ENCODE measurements at regions of chr2 and their contacts with region 1.

Region 1: DNA sequence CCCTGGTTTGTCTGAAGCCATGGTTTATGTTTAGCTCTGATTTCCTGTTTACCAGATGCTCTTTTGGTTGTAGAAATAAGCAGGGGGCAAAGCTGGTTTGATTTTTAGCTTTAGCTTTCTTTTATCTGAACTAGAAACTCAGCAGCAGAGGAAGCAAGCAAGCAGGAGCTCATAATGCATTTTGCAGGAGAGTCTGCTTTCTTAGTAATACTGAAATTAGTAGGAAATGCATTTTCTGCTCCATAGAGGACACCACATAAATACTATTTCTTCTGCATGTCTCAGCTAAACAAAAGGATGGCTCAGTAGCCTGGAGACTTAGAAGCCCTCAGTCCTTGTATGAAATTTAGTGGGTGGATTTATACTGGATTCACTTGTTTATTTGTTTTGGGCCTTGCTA is 23.1 kb downstream of the DGUOK start:
- DNase-seq: no peak
- ATAC-seq: no peak
- H3K4me3 ChIP-seq: no peak overlapping the region
- H3K4me3 Mint-ChIP-seq: peak overlapping the region; percentile 23
- H3K27ac ChIP-seq: no peak overlapping the region
- H3K27ac Mint-ChIP-seq: peak overlapping the region; percentile 87
- H3K4me1 ChIP-seq: peaks cover 35% of the 10 kb centered on the region
- H3K4me1 Mint-ChIP-seq: peaks cover 83% of the 10 kb centered on the region
- H3K27me3 ChIP-seq: no peaks in the 10 kb centered on the region
- H3K27me3 Mint-ChIP-seq: no peaks in the 10 kb centered on the region
- CTCF ChIP-seq: no peak

Region 2: GRCh38 chr2:73970850-73971471 is 21.2 kb after region 1 on chr2:
- CTCF ChIA-PET with region 1: no interaction called
- POLR2A ChIA-PET with region 1: interaction called, 15 read pairs
- intact Hi-C with region 1: no loop called
- DNase-seq: peak; percentile 23 to 89 (median 53)
- ATAC-seq: peak; percentile 84
- H3K4me3 ChIP-seq: peak overlapping the region; percentile 31
- H3K4me3 Mint-ChIP-seq: peak overlapping the region; percentile 70
- H3K27ac ChIP-seq: peak overlapping the region; percentile 60 to 65
- H3K27ac Mint-ChIP-seq: peak overlapping the region; percentile 96
- H3K4me1 ChIP-seq: peaks cover 45% of the 10 kb centered on the region
- H3K4me1 Mint-ChIP-seq: peaks cover 78% of the 10 kb centered on the region
- H3K27me3 ChIP-seq: no peaks in the 10 kb centered on the region
- H3K27me3 Mint-ChIP-seq: no peaks in the 10 kb centered on the region
- CTCF ChIP-seq: no peak

Region 3: DNA sequence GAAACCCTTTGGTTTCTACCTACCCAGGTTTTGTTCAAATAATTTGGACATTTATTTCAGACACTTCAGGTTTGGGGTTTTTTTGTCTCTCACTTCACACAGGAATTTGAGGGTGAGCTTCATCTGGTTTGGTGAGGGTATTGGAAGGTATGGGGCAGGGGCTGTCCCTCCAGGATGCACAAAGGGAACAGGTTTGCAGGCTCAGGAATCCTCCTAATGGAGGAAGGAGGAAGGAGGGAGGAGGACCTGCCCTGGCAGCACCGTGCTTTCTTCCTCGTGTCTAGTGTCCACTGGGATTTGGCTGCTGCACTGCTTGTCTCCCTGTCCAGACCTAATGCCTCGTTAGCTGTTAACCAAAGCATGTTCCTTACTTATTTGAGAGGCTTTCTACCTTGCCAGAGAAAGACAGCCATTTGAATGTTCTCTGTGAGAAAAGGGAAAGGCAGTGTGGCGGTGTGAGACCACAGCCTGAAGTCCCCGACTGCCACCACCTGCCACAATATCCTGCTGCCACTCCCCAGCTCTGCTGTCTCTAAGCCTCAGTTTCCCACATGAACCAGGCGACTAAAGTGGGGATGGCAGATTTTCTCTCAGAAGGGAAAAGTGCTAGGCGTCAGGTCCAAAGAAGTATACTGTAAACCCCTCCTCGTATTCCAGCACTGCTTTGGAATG is 395.6 kb after region 1 on chr2:
- CTCF ChIA-PET with region 1: no interaction called
- POLR2A ChIA-PET with region 1: no interaction called
- intact Hi-C with region 1: no loop called
- DNase-seq: no peak
- ATAC-seq: no peak
- H3K4me3 ChIP-seq: no peak overlapping the region
- H3K4me3 Mint-ChIP-seq: no peak overlapping the region
- H3K27ac ChIP-seq: no peak overlapping the region
- H3K27ac Mint-ChIP-seq: no peak overlapping the region
- H3K4me1 ChIP-seq: no peaks in the 10 kb centered on the region
- H3K4me1 Mint-ChIP-seq: no peaks in the 10 kb centered on the region
- H3K27me3 ChIP-seq: no peaks in the 10 kb centered on the region
- H3K27me3 Mint-ChIP-seq: no peaks in the 10 kb centered on the region
- CTCF ChIP-seq: no peak

Measured in CD4-positive, alpha-beta T cell (primary cell).